ENCODE measurements at regions of chr12 and their contacts with region 1.

Region 1: DNA sequence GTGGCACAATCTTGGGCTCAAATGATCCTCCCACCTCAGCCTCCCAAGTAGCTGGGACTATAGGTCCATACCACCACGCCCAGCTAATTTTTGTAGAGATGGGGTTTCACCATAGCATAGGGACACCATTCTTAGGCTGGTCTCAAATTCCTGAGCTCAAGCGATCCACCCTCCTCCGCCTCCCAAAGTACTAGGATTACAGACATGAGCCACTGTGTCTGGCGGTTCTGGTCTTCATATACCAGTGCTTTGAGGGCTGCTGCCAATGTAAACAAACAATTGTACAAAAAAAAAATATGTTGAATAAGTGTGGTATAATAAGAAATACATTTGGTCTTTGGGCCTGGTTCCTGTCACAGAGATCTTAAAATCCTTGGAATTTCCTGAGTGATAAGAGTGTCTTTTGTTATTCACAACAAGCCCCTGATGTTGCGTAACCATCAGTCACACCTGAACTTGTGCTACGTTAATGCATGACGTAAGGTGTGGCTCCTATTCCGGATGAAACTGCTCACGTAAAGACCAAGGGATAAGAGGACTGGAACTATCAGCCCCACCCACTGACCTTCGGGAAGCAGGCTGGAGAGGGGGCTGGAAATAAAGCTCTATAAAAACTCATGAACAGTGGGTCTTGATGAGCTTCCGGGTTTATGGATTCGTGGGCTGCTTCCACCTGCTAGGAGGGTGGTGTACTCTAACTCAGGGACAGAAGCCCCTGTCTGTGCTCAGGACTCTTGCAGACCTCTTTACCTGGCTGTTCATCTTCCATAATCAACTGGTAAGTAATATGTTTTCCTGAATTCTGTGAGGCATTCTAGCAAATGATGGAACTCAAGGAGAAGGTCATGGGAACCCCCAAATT is 16.5 kb upstream of the RIMKLB start:
- DNase-seq: no peak
- ATAC-seq: no peak
- H3K4me3 ChIP-seq: no peak overlapping the region
- H3K4me3 Mint-ChIP-seq: no peak overlapping the region
- H3K27ac ChIP-seq: no peak overlapping the region
- H3K27ac Mint-ChIP-seq: no peak overlapping the region
- H3K4me1 ChIP-seq: no peaks in the 10 kb centered on the region
- H3K4me1 Mint-ChIP-seq: peaks cover 0 to 7% of the 10 kb centered on the region in 2 donors
- H3K27me3 ChIP-seq: no peaks in the 10 kb centered on the region
- H3K27me3 Mint-ChIP-seq: peaks cover 0 to 3% of the 10 kb centered on the region in 2 donors
- CTCF ChIP-seq: no peak

Region 2: DNA sequence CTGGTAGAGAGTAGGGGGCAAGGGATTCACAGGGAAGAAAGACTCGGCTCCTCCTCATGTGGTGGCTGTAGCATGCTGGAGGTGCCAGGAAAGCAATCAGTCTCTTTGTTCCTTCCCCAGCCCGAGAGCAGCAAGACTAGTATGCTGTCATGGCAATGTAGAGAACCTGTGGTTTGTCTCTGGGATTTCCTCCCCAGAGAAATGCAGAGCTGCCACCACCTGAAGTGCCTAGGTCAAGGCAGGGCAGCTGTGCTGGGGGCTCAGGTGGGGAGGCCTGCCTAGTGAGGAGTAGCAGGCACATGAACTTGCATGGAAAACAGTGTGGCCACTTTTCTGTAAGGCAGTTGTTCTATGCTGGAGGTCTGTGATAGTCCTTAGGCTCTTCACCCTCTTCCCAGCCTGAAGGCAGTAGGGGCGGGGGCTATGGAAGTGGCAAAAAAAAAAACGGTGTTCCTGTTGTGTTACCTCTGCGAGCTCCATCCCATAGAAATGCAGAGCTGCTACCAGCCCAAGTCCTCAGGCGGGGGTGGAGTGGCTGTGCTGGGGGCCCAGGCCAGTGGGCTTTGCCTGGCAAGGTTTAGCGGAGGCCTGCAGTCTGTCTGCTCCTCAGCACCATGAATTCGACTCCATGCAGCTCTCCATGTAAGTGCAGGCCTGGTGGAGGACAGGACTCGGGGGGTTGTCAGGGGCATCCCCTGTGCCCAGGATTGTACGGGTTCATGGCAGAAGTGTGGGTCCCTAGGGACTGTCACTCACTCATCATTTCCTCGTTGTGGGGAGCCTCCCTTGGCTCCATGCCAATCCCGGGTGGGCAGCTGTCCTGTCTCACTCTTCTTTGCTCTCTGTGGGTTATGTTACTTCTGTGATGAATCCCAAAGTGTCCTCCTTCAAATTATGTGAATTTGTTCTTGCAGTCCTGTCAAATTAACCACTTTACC is 172.1 kb before region 1 on chr12:
- intact Hi-C with region 1: no loop called
- DNase-seq: no peak
- ATAC-seq: no peak
- H3K4me3 ChIP-seq: no peak overlapping the region
- H3K4me3 Mint-ChIP-seq: no peak overlapping the region
- H3K27ac ChIP-seq: no peak overlapping the region
- H3K27ac Mint-ChIP-seq: no peak overlapping the region
- H3K4me1 ChIP-seq: no peaks in the 10 kb centered on the region
- H3K4me1 Mint-ChIP-seq: no peaks in the 10 kb centered on the region
- H3K27me3 ChIP-seq: peaks cover 2% of the 10 kb centered on the region
- H3K27me3 Mint-ChIP-seq: peaks cover 26 to 47% of the 10 kb centered on the region in 2 donors
- CTCF ChIP-seq: no peak

Region 3: DNA sequence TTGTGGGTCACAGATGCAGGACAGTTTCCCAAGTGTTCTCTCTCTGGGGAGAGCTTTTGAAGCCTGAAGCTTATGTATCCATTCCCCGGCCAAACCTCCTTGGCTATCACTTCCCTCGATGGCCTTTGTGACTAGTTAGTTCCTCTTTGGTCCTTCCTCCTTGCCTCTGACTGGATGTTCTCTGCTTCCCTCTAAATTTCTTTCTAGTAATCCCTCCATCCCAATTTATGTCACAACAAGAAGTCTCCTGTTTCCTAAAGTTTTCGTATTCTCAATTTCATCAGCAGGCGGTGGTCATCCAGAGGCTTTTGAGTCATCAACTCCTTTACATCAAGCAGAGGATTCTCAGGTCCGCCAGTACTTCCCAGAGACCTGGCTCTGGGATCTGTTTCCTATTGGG is 168.6 kb after region 1 on chr12:
- intact Hi-C with region 1: no loop called
- DNase-seq: no peak
- ATAC-seq: no peak
- H3K4me3 ChIP-seq: no peak overlapping the region
- H3K4me3 Mint-ChIP-seq: no peak overlapping the region
- H3K27ac ChIP-seq: no peak overlapping the region
- H3K27ac Mint-ChIP-seq: no peak overlapping the region
- H3K4me1 ChIP-seq: no peaks in the 10 kb centered on the region
- H3K4me1 Mint-ChIP-seq: no peaks in the 10 kb centered on the region
- H3K27me3 ChIP-seq: no peaks in the 10 kb centered on the region
- H3K27me3 Mint-ChIP-seq: peaks cover 0 to under 1% of the 10 kb centered on the region in 2 donors
- CTCF ChIP-seq: no peak

Region 4: GRCh38 chr12:8860165-8860961 is 179.1 kb after region 1 on chr12:
- intact Hi-C with region 1: loop called (anchors 1 kb)
- DNase-seq: peak in 1 of 2 donors; percentile 67
- ATAC-seq: peak in 2 of 3 donors; percentile 34 to 67
- H3K4me3 ChIP-seq: no peak overlapping the region
- H3K4me3 Mint-ChIP-seq: no peak overlapping the region
- H3K27ac ChIP-seq: no peak overlapping the region
- H3K27ac Mint-ChIP-seq: no peak overlapping the region
- H3K4me1 ChIP-seq: no peaks in the 10 kb centered on the region
- H3K4me1 Mint-ChIP-seq: no peaks in the 10 kb centered on the region
- H3K27me3 ChIP-seq: no peaks in the 10 kb centered on the region
- H3K27me3 Mint-ChIP-seq: no peaks in the 10 kb centered on the region
- CTCF ChIP-seq: peak; percentile 50

Region 5: GRCh38 chr12:8890313-8891085 is 209.2 kb after region 1 on chr12:
- intact Hi-C with region 1: loop called (anchors 1 kb)
- DNase-seq: peak; percentile 39 to 82
- ATAC-seq: peak; percentile 81 to 87 (median 87)
- H3K4me3 ChIP-seq: peak overlapping the region; percentile 49
- H3K4me3 Mint-ChIP-seq: peak overlapping the region; percentile 90
- H3K27ac ChIP-seq: no peak overlapping the region
- H3K27ac Mint-ChIP-seq: peak overlapping the region in 1 of 2 donors; percentile 88
- H3K4me1 ChIP-seq: peaks cover 3% of the 10 kb centered on the region
- H3K4me1 Mint-ChIP-seq: peaks cover 0 to 5% of the 10 kb centered on the region in 2 donors
- H3K27me3 ChIP-seq: no peaks in the 10 kb centered on the region
- H3K27me3 Mint-ChIP-seq: peaks cover 0 to 3% of the 10 kb centered on the region in 2 donors
- CTCF ChIP-seq: peak; percentile 96